ENCODE measurements at regions of chr16 and their contacts with region 1.

Region 1: GRCh38 chr16:4328046-4328503 is 12.2 kb downstream of the GLIS2 start:
- DNase-seq: peak; percentile 90 to 96 (median 92)
- H3K4me3 ChIP-seq: peak overlapping the region in 1 of 3 donors; percentile 52
- H3K27ac ChIP-seq: peak overlapping the region; percentile 91 to 95
- H3K4me1 ChIP-seq: peaks cover 0 to 54% (median 52%) of the 10 kb centered on the region in 3 donors
- H3K27me3 ChIP-seq: no peaks in the 10 kb centered on the region
- CTCF ChIP-seq: peak; percentile 51

Region 2: GRCh38 chr16:4293822-4294457 is 34.1 kb before region 1 on chr16:
- intact Hi-C with region 1: loop called (anchors 5 kb)
- DNase-seq: peak; percentile 86 to 95 (median 91)
- H3K4me3 ChIP-seq: no peak overlapping the region
- H3K27ac ChIP-seq: peak overlapping the region in 1 of 2 donors; percentile 76
- H3K4me1 ChIP-seq: peaks cover 2 to 17% (median 5%) of the 10 kb centered on the region in 3 donors
- H3K27me3 ChIP-seq: no peaks in the 10 kb centered on the region
- CTCF ChIP-seq: no peak